BJ (cell line): ENCODE measurements at regions of chr4 and their contacts with region 1.

Region 1: DNA sequence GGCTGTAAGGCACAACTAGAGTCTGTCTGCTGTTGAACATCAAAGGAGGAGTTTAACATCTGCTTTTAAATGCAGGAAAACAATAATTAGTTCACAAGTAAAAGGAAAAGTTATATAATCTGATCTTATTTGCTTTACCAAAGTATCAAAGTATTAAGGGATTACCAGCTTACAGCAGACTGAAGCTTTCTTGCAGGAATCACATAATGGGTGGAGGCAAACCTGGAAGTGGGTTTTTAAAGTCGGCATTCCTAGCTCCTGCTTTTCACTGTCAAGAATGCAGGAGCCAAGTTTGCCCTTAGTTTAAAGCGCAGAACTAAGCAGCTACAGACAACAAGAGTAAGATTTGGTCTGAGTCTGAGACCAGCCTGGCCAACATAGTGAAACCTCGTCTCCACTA is 122.2 kb downstream of the APBB2 start:
- DNase-seq: no peak
- H3K4me3 ChIP-seq: no peak overlapping the region
- H3K27me3 ChIP-seq: no peaks in the 10 kb centered on the region
- CTCF ChIP-seq: no peak

Region 2: GRCh38 chr4:41028392-41029076 is 63.6 kb before region 1 on chr4:
- CTCF ChIA-PET with region 1: no interaction called
- POLR2A ChIA-PET with region 1: interaction called, 13 read pairs
- DNase-seq: no peak
- H3K4me3 ChIP-seq: no peak overlapping the region
- H3K27me3 ChIP-seq: no peaks in the 10 kb centered on the region
- CTCF ChIP-seq: no peak